IMR-90 (cell line): ENCODE measurements at regions of chr4 and their contacts with region 1.

Region 1: DNA sequence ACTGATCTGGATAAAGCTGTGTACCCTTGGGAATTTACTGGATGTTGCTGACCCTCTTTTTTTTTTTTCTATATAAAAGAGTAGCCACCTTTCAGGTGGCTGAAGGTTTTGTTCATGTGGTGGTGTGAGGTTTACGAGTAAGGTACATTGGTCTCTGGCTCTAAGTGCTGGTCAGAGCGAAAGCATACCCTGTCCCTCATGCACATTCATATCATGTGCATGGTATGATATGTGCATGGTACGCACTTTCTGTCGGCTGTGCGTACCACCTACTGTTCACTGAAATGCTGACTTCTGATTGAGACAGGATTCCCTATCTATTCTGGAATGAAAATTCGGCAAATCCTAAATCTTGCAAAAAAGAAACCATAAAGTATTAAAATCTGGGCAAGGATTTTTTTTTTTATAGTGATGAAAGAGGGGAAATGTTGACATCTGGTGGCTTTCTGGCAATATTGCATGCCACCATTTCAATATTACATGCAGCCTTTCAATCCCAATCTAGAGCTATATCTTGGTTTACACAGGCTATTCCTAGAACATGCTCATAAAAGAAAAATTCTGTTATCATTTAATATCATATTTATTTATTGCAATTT is 32.8 kb downstream of the FAM149A start:
- DNase-seq: peak; percentile 27
- ATAC-seq: peak; percentile 68
- H3K4me3 ChIP-seq: no peak overlapping the region
- H3K27ac ChIP-seq: no peak overlapping the region
- H3K4me1 ChIP-seq: no peaks in the 10 kb centered on the region
- H3K27me3 ChIP-seq: peaks cover 2% of the 10 kb centered on the region; the same call in 1 of the 2 replicates
- CTCF ChIP-seq: peak; percentile 51
- POLR2A ChIP-seq: no peak
- RAD21 ChIP-seq: peak; percentile 54

Region 2: DNA sequence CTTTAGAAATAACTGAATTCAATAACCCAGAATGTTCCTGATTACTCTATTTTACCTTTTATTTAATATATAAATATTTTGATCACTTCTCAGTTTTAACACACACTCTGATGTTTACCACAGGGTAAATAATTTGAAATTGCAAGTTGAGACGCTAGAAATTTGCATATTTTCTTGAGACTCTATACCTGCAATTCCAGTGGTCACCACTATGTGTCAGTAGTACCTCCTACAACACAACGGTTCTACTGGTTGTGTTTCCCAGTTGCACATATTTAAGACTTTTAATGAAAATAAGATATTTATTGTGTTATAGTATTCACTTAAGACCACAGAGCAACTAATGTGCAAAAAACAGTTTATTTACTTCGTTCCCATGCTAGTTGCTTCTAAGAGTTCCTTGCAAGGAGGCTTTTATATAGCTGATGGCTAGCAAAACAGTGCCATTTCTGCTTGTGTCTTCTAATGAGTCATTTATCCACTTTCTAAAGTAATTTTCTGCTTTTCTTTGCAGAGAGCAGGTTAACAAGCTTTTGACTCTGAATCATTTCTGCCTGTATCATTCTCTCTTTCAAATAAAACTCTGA is 503.1 kb before region 1 on chr4:
- CTCF ChIA-PET with region 1: no interaction called
- POLR2A ChIA-PET with region 1: no interaction called
- dilution Hi-C with region 1: no loop called
- in situ Hi-C with region 1: no loop called
- intact Hi-C with region 1: loop called (anchors 5 kb)
- DNase-seq: peak; percentile 7
- ATAC-seq: no peak
- H3K4me3 ChIP-seq: no peak overlapping the region
- H3K27ac ChIP-seq: no peak overlapping the region
- H3K4me1 ChIP-seq: peaks cover 3% of the 10 kb centered on the region; the same call in 1 of the 2 replicates
- H3K27me3 ChIP-seq: peaks cover 19% of the 10 kb centered on the region
- CTCF ChIP-seq: peak; percentile 33
- POLR2A ChIP-seq: no peak
- RAD21 ChIP-seq: peak; percentile 26; the same call in 1 of the 2 replicates

Region 3: GRCh38 chr4:186067757-186068385 is 69.4 kb before region 1 on chr4:
- CTCF ChIA-PET with region 1: interaction called, 8 read pairs
- POLR2A ChIA-PET with region 1: no interaction called
- dilution Hi-C with region 1: no loop called
- in situ Hi-C with region 1: no loop called
- intact Hi-C with region 1: loop called (anchors 1 kb)
- DNase-seq: peak; percentile 19
- ATAC-seq: peak; percentile 79
- H3K4me3 ChIP-seq: no peak overlapping the region
- H3K27ac ChIP-seq: no peak overlapping the region
- H3K4me1 ChIP-seq: peaks cover 1% of the 10 kb centered on the region; the same call in 1 of the 2 replicates
- H3K27me3 ChIP-seq: no peaks in the 10 kb centered on the region
- CTCF ChIP-seq: peak; percentile 27; the same call in 1 of the 2 replicates
- POLR2A ChIP-seq: no peak
- RAD21 ChIP-seq: peak; percentile 22; the same call in 1 of the 2 replicates